Activated CD4-positive, alpha-beta T cell treated with anti-CD3 and anti-CD28 coated beads for 36 hours (primary cell): ENCODE measurements at regions of chr16 and their contacts with region 1.

Region 1: GRCh38 chr16:4616047-4616811 is 1.5 kb upstream of the UBALD1 start:
- DNase-seq: peak; percentile 100
- ATAC-seq: peak; percentile 89
- H3K4me3 Mint-ChIP-seq: peak overlapping the region; percentile 86
- H3K27ac Mint-ChIP-seq: peak overlapping the region; percentile 95
- H3K4me1 Mint-ChIP-seq: peaks cover 17% of the 10 kb centered on the region
- H3K27me3 Mint-ChIP-seq: no peaks in the 10 kb centered on the region

Region 2: GRCh38 chr16:3611146-3611975 is 1004.9 kb before region 1 on chr16 and contains the start of gene SLX4:
- CTCF ChIA-PET with region 1: no interaction called
- POLR2A ChIA-PET with region 1: no interaction called
- intact Hi-C with region 1: loop called in 1 of 2 experiments (anchors 2 kb)
- DNase-seq: peak; percentile 95
- ATAC-seq: peak; percentile 90
- H3K4me3 Mint-ChIP-seq: peak within 1 kb of the TSS; percentile 100
- H3K27ac Mint-ChIP-seq: peak within 1 kb of the TSS; percentile 98
- H3K4me1 Mint-ChIP-seq: peaks cover 41% of the 10 kb centered on the region
- H3K27me3 Mint-ChIP-seq: no peaks in the 10 kb centered on the region
- total RNA-seq, gene SLX4: 10.7 to 11.7 TPM

Region 3: DNA sequence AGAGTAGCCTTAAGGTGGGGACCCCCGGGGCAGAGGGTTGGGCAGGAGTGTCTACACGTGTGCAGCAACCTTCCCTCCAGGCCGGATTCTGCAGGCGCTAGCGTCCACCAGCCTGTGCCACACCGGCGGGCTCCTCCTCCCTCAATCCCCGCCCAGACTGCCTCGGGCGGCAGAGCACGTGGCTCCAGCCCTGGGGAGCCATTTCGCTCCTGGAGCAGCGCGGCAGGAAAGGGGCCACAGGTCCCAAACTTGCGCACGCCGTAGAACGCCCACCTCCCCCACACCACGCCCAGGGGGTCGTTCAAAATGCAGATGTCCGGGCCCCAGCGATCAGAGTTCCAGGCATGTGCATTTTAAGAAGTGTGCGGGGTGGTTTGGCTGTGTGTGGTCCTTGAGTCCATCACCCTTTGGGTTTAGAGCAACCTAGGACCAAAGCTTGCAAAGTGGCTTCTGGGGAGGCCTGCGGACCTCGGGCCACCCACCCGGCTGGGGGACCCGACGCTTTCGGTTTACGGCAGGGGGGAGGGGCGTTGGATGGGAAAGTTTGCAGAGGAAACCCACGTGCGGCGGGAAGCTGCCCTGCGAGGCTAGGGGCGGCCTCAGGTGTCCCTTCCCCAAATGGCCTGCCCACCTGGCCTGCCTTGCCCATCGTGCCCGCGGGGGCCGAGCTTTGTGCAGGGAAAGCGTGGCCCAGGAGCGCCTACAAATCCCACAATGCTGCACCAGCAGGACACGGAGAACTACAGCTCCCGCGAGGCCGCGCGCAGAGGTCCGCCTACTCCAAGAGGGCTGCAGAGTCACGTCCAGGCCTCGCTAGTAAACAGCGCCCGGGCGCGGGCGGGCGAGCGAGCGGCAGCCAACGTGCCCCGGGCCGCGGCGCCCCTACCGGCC is 344.8 kb before region 1 on chr16:
- CTCF ChIA-PET with region 1: no interaction called
- POLR2A ChIA-PET with region 1: no interaction called
- intact Hi-C with region 1: loop called in 1 of 2 experiments (anchors 1 kb)
- DNase-seq: peak; percentile 96
- ATAC-seq: peak; percentile 85
- H3K4me3 Mint-ChIP-seq: peak overlapping the region; percentile 84
- H3K27ac Mint-ChIP-seq: peak overlapping the region; percentile 94
- H3K4me1 Mint-ChIP-seq: peaks cover 12% of the 10 kb centered on the region
- H3K27me3 Mint-ChIP-seq: no peaks in the 10 kb centered on the region

Region 4: GRCh38 chr16:4425378-4426020 is 190.7 kb before region 1 on chr16 and contains the start of gene DNAJA3:
- CTCF ChIA-PET with region 1: no interaction called
- POLR2A ChIA-PET with region 1: interaction called, 3 read pairs
- intact Hi-C with region 1: loop called (anchors 1 to 2 kb)
- DNase-seq: peak; percentile 96
- ATAC-seq: peak; percentile 93
- H3K4me3 Mint-ChIP-seq: peak within 1 kb of the TSS; percentile 95
- H3K27ac Mint-ChIP-seq: peak within 1 kb of the TSS; percentile 98
- H3K4me1 Mint-ChIP-seq: peaks cover 27% of the 10 kb centered on the region
- H3K27me3 Mint-ChIP-seq: no peaks in the 10 kb centered on the region
- total RNA-seq, gene DNAJA3: 93.9 to 102 TPM

Region 5: DNA sequence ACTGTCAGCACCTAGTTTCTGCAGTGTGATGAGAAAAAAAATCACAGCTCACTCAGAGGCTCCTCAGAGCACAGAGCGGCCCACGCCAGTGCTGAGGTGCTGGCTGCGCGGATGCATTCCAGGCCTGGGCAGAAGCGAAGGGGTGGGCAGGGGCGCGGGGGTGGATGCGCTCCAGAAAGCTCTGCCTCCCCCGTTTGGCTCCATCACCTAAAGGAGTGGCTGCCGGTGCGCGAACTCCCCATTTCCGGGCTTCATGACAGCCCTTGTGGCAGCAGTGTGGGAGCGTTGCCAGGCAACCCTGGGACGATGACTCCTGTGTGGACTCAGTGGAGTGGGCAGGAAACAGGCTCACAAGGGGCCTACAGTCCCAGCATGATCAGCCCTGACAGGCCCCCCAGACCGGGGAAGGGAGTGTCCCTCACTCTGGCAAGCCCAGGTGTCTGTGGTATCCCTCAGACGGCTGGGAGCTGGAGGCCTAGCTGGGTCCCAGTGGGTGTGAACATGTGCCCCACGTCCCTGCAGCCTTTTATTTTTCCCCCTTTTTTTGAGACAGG is 44.3 kb after region 1 on chr16:
- CTCF ChIA-PET with region 1: no interaction called
- POLR2A ChIA-PET with region 1: interaction called, 3 read pairs
- intact Hi-C with region 1: loop called in 1 of 2 experiments (anchors 1 kb)
- DNase-seq: peak; percentile 94
- ATAC-seq: peak; percentile 82
- H3K4me3 Mint-ChIP-seq: no peak overlapping the region
- H3K27ac Mint-ChIP-seq: peak overlapping the region; percentile 68
- H3K4me1 Mint-ChIP-seq: peaks cover 70% of the 10 kb centered on the region
- H3K27me3 Mint-ChIP-seq: no peaks in the 10 kb centered on the region

Region 6: DNA sequence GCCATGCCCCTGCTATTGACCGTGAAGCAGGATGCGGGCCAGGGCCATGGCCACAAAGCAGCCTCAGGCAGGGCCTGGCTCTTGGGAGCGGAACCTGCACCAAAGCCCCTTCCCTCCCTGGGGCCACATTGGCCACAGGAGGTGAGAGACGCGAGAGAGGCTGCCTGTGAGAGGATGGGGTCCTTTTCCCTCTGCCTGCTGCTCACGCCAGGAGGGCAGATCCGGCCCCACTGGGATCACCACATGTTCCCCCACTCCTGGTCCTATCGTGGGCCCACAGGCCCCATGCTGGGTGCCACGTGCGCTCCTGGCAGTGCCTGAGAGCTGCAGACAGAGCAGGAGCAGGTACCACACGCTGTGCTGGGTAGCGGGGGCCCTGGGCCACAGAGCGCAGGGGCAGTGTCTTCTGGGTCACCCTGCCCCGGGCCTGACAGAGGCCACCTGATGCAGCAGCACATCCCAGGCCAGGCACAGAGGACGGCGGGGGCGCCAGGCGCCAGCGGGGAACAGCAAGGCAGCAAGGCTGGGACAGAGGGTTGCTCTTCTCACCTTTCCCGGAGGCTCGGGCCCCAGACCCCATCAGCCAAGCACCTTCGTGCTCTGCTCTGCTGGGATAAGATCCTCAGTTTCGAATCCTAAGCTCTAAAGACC is 68.0 kb after region 1 on chr16:
- CTCF ChIA-PET with region 1: no interaction called
- POLR2A ChIA-PET with region 1: no interaction called
- intact Hi-C with region 1: no loop called
- DNase-seq: no peak
- ATAC-seq: no peak
- H3K4me3 Mint-ChIP-seq: no peak overlapping the region
- H3K27ac Mint-ChIP-seq: no peak overlapping the region
- H3K4me1 Mint-ChIP-seq: peaks cover 4% of the 10 kb centered on the region
- H3K27me3 Mint-ChIP-seq: no peaks in the 10 kb centered on the region

Region 7: GRCh38 chr16:4734063-4734729 is 118.0 kb after region 1 on chr16 and contains the starts of genes ANKS3 and DNAAF8:
- CTCF ChIA-PET with region 1: no interaction called
- POLR2A ChIA-PET with region 1: interaction called, 5 read pairs
- intact Hi-C with region 1: loop called (anchors 1 to 2 kb)
- DNase-seq: peak; percentile 88
- ATAC-seq: peak; percentile 82
- H3K4me3 Mint-ChIP-seq: peak within 1 kb of the TSS; percentile 86
- H3K27ac Mint-ChIP-seq: peak within 1 kb of the TSS; percentile 58
- H3K4me1 Mint-ChIP-seq: peaks cover 13% of the 10 kb centered on the region
- H3K27me3 Mint-ChIP-seq: no peaks in the 10 kb centered on the region
- total RNA-seq, gene ANKS3: 12.1 to 14.1 TPM
- total RNA-seq, gene DNAAF8: 0.11 to 0.16 TPM

Region 8: DNA sequence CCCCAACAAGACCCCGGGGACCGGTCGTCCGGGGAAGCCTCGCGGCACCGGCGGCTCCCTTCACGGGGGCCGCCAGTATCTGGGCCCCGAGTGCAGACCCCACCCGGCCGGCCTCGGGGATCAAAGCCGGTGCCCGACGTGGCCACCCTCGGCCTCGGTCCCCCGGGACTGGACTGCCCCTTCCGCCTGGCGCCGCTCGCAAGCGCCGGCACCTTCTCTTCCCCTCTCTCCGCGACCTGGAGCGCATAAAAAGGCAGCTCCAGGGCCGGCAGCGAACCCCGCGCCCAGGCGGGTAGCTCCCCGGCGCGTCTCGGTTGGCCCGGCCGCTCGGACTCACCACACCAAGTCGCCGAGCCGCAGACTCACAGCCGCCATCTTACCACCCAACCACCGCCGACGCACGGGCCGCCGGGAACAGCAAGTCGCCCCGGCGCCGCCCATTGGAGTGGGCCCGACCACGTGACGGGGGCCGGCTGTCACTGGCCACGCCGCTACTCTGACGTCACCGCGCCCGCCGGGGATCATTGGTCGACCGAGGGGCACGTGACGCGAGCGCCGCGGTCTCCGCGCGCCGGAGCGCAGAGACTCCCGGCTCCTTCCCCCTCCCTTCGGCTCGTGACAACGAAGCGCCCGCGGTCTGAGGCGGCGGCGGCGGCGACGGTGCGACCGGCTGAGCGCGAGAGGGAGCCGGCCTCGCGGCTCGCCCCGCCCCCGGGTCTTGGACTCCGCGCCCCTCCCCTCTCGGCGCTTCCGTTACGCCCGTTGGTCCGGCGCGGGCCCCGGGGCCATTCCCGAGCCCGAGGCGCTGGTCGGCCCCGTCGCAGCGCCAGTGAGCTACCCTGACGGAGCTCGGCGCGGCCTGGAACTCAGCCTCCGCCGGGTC is 230.9 kb after region 1 on chr16 and contains the starts of genes GLYR1 and UBN1:
- CTCF ChIA-PET with region 1: no interaction called
- POLR2A ChIA-PET with region 1: no interaction called
- intact Hi-C with region 1: loop called (anchors 1 to 10 kb)
- DNase-seq: peak; percentile 100
- ATAC-seq: peak; percentile 96
- H3K4me3 Mint-ChIP-seq: peak within 1 kb of the TSS; percentile 77
- H3K27ac Mint-ChIP-seq: peak within 1 kb of the TSS; percentile 84
- H3K4me1 Mint-ChIP-seq: peaks cover 54% of the 10 kb centered on the region
- H3K27me3 Mint-ChIP-seq: no peaks in the 10 kb centered on the region
- total RNA-seq, gene GLYR1: 76.9 to 78.4 TPM
- total RNA-seq, gene UBN1: 19.3 to 23.0 TPM